MCF 10A (cell line): ENCODE measurements at regions of chr1 and their contacts with region 1.

Region 1: DNA sequence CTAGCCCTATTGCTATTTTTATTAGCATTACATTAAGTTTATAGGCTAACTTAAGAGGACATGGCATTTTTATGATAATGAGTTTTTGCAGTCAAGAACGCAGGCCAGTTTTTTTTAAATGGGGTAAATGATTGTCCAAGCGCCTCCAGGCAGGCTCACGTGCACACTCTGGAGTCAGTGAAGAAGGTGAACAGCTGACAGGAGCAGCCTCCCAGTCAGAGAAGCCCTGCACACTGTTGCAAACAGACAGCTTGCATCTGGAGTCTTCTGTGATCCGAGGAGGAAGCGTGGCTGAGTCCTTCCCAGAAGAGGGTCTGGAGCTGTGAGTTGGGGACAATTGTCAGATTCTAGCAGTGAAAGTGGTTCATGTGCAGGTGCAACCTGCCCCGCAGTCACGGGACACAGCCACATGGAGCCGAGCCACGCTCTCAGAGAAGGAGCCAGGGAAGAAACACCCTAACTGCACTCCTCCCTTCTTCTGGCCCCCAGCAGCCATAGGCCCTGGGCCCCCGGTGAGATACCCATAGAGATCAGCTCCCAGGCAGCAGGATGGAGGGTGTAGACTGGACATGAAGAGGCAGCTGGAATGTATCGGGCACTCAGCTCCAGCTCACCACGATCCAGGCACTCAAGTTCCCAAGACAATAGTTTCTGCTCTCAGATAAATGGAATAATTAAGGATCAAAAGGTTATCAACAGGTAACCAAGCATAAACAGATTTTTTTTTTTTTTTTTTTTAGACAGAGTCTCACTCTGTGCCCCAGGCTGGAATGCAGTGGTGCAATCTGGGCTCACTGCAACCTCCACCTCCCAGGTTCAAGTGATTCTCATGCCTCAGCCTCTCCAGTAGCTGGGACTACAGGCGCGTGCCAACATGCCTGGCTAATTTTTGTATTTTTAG is 26.4 kb downstream of the CAPN2 start:
- DNase-seq: peak; percentile 72
- H3K4me3 Mint-ChIP-seq: no peak overlapping the region
- H3K27ac Mint-ChIP-seq: peak overlapping the region; percentile 82
- H3K4me1 Mint-ChIP-seq: peaks cover 42% of the 10 kb centered on the region
- H3K27me3 Mint-ChIP-seq: no peaks in the 10 kb centered on the region
- CTCF ChIP-seq: no peak

Region 2: DNA sequence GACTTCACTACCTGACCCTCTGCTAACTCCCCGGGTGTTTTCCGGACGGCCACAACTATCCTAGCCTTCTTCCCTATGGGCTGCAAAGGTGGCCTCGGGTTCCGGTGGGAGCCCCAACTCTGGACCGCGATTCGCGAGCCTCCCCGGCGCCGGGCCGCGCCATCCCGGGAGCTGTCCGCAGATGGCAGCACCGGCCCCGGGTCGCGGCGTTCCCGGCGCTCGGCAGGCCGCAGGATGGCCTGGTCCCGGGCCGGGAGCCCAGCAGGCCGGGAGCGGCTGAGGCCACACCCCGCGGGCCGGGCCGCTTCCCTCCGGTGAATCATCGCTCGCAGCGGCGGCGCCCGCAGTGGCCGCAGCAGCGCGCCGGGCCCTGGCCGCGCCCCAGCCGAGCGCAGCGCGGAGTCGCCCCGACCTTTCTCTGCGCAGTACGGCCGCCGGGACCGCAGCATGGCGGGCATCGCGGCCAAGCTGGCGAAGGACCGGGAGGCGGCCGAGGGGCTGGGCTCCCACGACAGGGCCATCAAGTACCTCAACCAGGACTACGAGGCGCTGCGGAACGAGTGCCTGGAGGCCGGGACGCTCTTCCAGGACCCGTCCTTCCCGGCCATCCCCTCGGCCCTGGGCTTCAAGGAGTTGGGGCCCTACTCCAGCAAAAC is 26.4 kb before region 1 on chr1 and contains the start of gene CAPN2:
- CTCF ChIA-PET with region 1: interaction called, 17 read pairs
- POLR2A ChIA-PET with region 1: interaction called, 64 read pairs
- intact Hi-C with region 1: no loop called
- DNase-seq: peak; percentile 94
- H3K4me3 Mint-ChIP-seq: peak within 1 kb of the TSS; percentile 77
- H3K27ac Mint-ChIP-seq: peak within 1 kb of the TSS; percentile 88
- H3K4me1 Mint-ChIP-seq: peaks cover 61% of the 10 kb centered on the region
- H3K27me3 Mint-ChIP-seq: no peaks in the 10 kb centered on the region
- CTCF ChIP-seq: peak; percentile 98
- total RNA-seq, gene CAPN2: 513 and 622 TPM in 2 replicates

Region 3: GRCh38 chr1:223720928-223721591 is 17.7 kb before region 1 on chr1:
- CTCF ChIA-PET with region 1: interaction called, 11 read pairs
- POLR2A ChIA-PET with region 1: interaction called, 53 read pairs
- intact Hi-C with region 1: no loop called
- DNase-seq: peak; percentile 97
- H3K4me3 Mint-ChIP-seq: peak overlapping the region; percentile 3
- H3K27ac Mint-ChIP-seq: peak overlapping the region; percentile 82
- H3K4me1 Mint-ChIP-seq: peaks cover 67% of the 10 kb centered on the region
- H3K27me3 Mint-ChIP-seq: no peaks in the 10 kb centered on the region
- CTCF ChIP-seq: no peak

Region 4: DNA sequence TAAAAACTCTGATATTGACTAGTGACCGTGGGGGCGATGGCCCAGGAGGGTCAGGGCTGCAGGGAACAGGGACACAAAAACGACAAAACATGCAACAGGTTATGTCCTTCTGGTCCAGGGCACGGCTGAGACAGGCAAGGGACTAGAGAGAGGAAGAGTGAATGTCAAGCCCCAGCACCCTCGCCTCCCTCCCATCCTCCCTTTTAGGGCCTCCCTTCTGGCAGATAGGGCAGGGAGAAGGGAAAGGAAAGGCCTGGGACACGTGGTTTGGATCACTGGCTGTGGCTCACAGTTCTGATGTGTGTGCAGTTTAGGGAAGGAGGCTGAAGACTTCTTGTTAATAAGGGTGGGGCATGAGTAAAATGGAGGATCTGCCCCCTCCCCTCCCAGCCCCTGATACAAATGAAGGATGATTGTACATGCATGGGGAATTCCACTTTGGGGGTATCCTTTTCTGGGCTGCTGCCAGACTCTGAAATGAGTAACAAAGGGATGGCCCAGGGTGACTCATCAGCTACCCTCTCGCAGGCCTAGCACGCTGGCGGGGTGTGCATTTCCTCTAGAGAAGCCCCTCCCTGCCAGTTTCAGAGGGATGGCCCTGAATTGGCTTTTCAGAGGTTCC is 12.2 kb before region 1 on chr1:
- CTCF ChIA-PET with region 1: interaction called, 22 read pairs
- POLR2A ChIA-PET with region 1: interaction called, 53 read pairs
- intact Hi-C with region 1: no loop called
- DNase-seq: peak; percentile 100
- H3K4me3 Mint-ChIP-seq: peak overlapping the region; percentile 32
- H3K27ac Mint-ChIP-seq: peak overlapping the region; percentile 90
- H3K4me1 Mint-ChIP-seq: peaks cover 66% of the 10 kb centered on the region
- H3K27me3 Mint-ChIP-seq: no peaks in the 10 kb centered on the region
- CTCF ChIP-seq: no peak

Region 5: DNA sequence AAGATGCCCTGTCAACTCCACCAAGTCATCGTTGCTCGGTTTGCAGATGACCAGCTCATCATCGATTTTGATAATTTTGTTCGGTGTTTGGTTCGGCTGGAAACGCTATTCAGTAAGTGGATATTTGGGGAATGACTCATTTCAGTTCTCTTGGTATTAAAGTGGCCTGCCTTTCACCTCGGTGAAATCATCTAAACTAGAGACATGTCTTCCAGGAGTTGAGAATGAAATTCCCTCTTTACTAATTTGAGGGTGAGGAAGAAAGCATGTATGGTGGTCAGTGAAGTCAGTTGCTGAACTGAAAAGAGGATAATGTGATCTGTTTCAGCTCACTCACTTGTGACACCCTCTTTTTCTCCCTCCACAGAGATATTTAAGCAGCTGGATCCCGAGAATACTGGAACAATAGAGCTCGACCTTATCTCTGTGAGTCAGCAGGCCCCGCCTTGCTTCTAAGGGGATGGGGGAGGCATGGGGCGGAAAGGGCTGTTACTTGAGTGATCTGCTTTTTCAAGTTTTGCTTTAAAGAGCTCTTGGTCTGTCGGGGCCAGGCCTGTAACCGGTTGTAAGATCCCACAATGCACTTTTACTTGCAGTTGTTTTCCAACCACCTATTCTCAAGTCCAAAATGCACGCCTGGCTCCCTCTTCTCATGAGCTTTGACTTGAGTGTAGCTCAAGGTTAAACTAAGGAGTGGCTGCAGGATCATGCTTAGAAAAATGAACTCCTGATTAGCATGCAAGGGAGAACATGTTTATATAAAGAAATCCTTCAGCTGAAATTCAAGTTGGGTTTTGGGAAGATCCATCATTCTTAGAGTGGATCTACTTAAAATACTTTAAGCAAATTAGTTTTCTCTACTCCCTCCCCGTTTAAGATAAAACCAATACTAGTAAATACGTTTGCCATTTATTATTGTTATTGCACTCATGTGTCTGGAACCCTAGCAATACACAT is 33.4 kb after region 1 on chr1:
- CTCF ChIA-PET with region 1: interaction called, 4 read pairs
- POLR2A ChIA-PET with region 1: interaction called, 12 read pairs
- intact Hi-C with region 1: no loop called
- DNase-seq: peak; percentile 82
- H3K4me3 Mint-ChIP-seq: peak overlapping the region; percentile 52
- H3K27ac Mint-ChIP-seq: peak overlapping the region; percentile 92
- H3K4me1 Mint-ChIP-seq: peaks cover 69% of the 10 kb centered on the region
- H3K27me3 Mint-ChIP-seq: no peaks in the 10 kb centered on the region
- CTCF ChIP-seq: no peak